ENCODE measurements at regions of chr13 and their contacts with region 1.

Region 1: GRCh38 chr13:85528491-85529215 is 270.6 kb downstream of the SLITRK6 start:
- DNase-seq: peak in 1 of 2 experiments; percentile 61
- H3K4me3 ChIP-seq: no peak overlapping the region
- H3K27ac ChIP-seq: 0 out of 2 replicates have a peak overlapping the region, but pooled peaks have one; percentile 20
- H3K4me1 ChIP-seq: peaks cover 9% of the 10 kb centered on the region; the same call in 1 of the 2 replicates
- H3K27me3 ChIP-seq: no peaks in the 10 kb centered on the region
- CTCF ChIP-seq: no peak

Region 2: DNA sequence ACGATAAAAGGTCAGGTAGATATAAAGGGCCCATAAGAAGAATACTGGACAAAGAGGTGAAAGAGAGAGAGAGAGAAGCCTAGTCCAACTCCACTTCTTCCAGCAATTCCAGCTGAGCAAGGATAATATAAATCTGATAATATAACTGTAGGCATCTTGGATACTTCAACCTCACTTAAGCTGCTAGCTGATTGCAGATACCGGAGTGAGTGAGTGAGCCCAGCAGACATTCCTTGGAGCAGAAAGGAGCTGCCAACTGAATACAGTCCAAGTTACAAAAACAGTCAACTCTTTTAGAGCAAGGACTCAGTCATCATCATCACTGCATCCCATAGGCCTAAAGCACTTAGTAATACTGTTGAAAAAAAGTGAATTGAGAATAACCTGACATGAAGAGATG is 117.1 kb before region 1 on chr13:
- CTCF ChIA-PET with region 1: no interaction called
- POLR2A ChIA-PET with region 1: no interaction called
- intact Hi-C with region 1: loop called (anchors 10 kb)
- DNase-seq: no peak
- H3K4me3 ChIP-seq: no peak overlapping the region
- H3K27ac ChIP-seq: no peak overlapping the region
- H3K4me1 ChIP-seq: no peaks in the 10 kb centered on the region
- H3K27me3 ChIP-seq: no peaks in the 10 kb centered on the region
- CTCF ChIP-seq: no peak

Measured in PC-9 (cell line).